Activated CD8-positive, alpha-beta T cell treated with anti-CD3 and anti-CD28 coated beads, Interleukin-2, amount 10 ng/mL, durations not matched to agents 7 days and 5 days (primary cell): ENCODE measurements at regions of chr1 and their contacts with region 1.

Region 1: DNA sequence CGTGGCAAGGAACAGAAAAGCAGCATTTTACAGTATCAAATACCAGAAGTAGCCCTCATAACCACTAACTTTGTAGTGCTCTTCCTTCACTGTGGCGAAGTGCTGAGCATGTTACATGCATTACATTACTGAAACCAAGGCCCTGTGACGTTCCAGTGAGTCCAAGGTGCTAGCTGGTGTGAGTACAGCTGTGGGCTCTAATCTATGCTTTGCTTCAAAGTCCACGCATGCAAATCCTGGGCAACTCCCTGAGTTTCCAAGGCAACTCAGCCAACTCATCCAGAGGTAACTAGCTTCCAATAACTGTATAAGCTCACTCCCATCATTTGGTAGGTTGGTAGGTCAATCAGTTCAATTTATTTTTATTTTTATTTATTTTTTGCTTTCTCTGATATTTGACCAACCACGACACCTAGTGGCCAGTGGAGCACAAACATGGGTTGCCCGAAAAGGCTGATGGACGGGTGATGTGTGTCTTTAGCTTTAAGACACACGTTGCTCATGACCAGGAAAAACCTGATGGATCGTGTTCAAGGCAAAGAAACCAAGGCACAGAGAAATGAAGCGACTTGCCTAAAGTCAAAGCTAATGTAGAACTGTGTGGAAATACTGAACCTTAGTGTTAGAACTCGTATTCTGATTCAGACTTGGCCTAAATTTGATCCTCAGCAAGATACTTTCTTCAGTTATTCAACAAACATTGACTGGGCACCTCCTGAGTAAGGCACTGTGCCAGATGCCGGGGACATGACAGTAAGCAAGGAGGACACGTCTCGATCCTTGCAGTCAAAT is 73.0 kb downstream of the GNG12 start:
- DNase-seq: peak; percentile 70
- ATAC-seq: peak; percentile 65
- H3K4me3 Mint-ChIP-seq: no peak overlapping the region
- H3K27ac Mint-ChIP-seq: no peak overlapping the region
- H3K4me1 Mint-ChIP-seq: no peaks in the 10 kb centered on the region
- H3K27me3 Mint-ChIP-seq: peaks cover 18% of the 10 kb centered on the region

Region 2: GRCh38 chr1:67535474-67535873 is 224.8 kb before region 1 on chr1:
- CTCF ChIA-PET with region 1: interaction called, 30 read pairs
- POLR2A ChIA-PET with region 1: interaction called, 3 read pairs
- DNase-seq: peak; percentile 70
- ATAC-seq: peak; percentile 59
- H3K4me3 Mint-ChIP-seq: no peak overlapping the region
- H3K27ac Mint-ChIP-seq: no peak overlapping the region
- H3K4me1 Mint-ChIP-seq: peaks cover 13% of the 10 kb centered on the region
- H3K27me3 Mint-ChIP-seq: peaks cover 5% of the 10 kb centered on the region

Region 3: DNA sequence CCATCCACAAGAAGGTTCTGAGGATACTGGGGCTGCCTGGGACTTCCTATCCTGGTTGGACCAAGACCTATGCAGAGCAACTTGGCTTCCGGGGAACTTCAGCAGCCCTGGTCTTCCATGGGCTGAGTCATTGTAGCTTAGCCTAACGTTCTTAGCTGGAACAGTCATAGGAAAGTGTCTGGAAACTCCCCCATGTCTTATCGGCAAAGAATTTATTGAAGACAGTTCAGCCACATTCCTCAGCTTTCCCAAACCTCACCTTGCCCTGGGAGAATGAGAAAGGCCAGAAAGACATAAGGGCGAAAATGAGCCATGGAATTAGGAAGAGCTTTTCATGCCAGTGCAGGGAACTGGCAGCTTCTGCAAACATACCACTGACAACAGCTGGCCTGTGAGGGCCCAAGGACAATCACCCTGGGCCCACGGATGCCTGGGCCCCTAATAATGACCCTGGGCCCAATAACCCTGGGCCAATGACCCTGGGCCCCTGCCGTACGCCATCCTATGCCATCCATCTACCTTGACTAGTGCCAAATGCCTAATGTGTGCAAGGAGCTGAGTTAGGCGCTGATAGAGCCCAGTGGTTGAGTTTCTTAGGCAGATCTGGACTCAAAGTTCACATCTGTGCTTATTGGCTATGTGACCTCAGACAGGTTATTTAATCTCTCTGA is 189.6 kb before region 1 on chr1:
- CTCF ChIA-PET with region 1: interaction called, 177 read pairs
- POLR2A ChIA-PET with region 1: interaction called, 3 read pairs
- DNase-seq: no peak
- ATAC-seq: no peak
- H3K4me3 Mint-ChIP-seq: no peak overlapping the region
- H3K27ac Mint-ChIP-seq: no peak overlapping the region
- H3K4me1 Mint-ChIP-seq: no peaks in the 10 kb centered on the region
- H3K27me3 Mint-ChIP-seq: peaks cover 3% of the 10 kb centered on the region

Region 4: GRCh38 chr1:67685067-67685557 is 75.1 kb before region 1 on chr1 and contains the start of gene GADD45A:
- CTCF ChIA-PET with region 1: interaction called, 47 read pairs
- POLR2A ChIA-PET with region 1: interaction called, 4 read pairs
- DNase-seq: peak; percentile 98
- ATAC-seq: peak; percentile 95
- H3K4me3 Mint-ChIP-seq: peak within 1 kb of the TSS; percentile 95
- H3K27ac Mint-ChIP-seq: peak within 1 kb of the TSS; percentile 90
- H3K4me1 Mint-ChIP-seq: peaks cover 38% of the 10 kb centered on the region
- H3K27me3 Mint-ChIP-seq: peaks cover 4% of the 10 kb centered on the region
- total RNA-seq, gene GADD45A: 17.9 to 21.7 TPM

Region 5: GRCh38 chr1:67746299-67746698 is 13.9 kb before region 1 on chr1:
- CTCF ChIA-PET with region 1: interaction called, 20 read pairs
- POLR2A ChIA-PET with region 1: no interaction called
- DNase-seq: no peak
- ATAC-seq: no peak
- H3K4me3 Mint-ChIP-seq: no peak overlapping the region
- H3K27ac Mint-ChIP-seq: no peak overlapping the region
- H3K4me1 Mint-ChIP-seq: peaks cover 23% of the 10 kb centered on the region
- H3K27me3 Mint-ChIP-seq: peaks cover 18% of the 10 kb centered on the region